GM13976 (cell line): ENCODE measurements at regions of chr17 and their contacts with region 1.

Region 1: GRCh38 chr17:4407851-4408250 is 25.9 kb upstream of the SPNS3 start:
- DNase-seq: no peak
- CTCF ChIP-seq: no peak

Region 2: GRCh38 chr17:4199818-4200402 is 207.9 kb before region 1 on chr17:
- in situ Hi-C with region 1: loop called (anchors 10 kb)
- DNase-seq: peak; percentile 80
- CTCF ChIP-seq: peak; percentile 72